ENCODE measurements at regions of chr2 and their contacts with region 1.

Region 1: GRCh38 chr2:202831242-202832220 is 40.0 kb downstream of the ICA1L start:
- DNase-seq: peak; percentile 43
- ATAC-seq: peak; percentile 93
- H3K4me3 ChIP-seq: no peak overlapping the region
- H3K27ac ChIP-seq: no peak overlapping the region
- H3K4me1 ChIP-seq: no peaks in the 10 kb centered on the region; the same call in 1 of the 2 replicates
- H3K27me3 ChIP-seq: no peaks in the 10 kb centered on the region
- CTCF ChIP-seq: peak; percentile 81

Region 2: DNA sequence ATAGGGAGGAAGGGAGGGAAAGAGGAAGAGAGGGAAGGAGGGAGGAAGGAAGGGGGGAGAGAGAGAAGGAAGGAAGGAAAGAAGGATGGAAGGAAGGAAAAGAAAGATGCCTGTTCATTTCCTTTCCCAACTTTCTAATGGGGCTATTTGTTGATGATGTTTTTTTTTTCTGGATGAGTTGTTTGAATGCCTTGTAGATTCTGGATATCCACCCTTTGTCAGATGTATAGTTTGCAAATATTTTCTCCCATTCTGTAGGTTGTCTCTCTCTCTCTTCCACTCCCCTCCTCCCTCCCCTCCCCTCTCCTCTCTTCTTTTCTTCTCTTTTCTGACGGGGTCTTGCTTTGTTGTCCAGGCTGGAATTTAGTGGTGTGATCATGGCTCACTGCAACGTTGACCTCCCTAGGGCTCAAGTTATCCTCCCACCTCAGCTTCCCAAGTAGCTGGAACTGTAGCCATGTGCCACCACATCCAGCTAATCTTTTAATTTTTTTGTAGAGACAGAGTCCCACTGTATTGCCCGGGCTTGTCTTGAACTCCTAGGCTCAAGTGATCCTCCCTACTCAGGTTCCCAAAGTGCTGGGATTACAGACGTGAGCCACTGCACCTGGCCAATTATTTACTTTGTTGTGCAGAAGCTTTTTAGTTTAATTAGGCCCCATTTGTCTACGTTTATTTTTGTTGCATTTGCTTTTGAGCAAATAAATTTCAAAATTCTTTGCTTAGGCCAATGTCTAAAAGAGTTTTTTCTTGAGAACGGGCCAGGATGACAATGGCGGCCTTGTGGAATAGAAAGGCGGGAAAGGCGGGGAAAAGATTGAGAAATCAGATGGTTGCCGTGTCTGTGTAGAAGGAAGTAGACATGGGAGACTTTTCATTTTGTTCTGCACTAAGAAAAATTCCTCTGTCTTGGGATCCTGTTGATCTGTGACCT is 254.0 kb before region 1 on chr2:
- CTCF ChIA-PET with region 1: interaction called, 10 read pairs
- POLR2A ChIA-PET with region 1: no interaction called
- in situ Hi-C with region 1: no loop called
- intact Hi-C with region 1: no loop called
- DNase-seq: no peak
- ATAC-seq: no peak
- H3K4me3 ChIP-seq: no peak overlapping the region
- H3K27ac ChIP-seq: no peak overlapping the region
- H3K4me1 ChIP-seq: no peaks in the 10 kb centered on the region
- H3K27me3 ChIP-seq: no peaks in the 10 kb centered on the region
- CTCF ChIP-seq: no peak

Region 3: DNA sequence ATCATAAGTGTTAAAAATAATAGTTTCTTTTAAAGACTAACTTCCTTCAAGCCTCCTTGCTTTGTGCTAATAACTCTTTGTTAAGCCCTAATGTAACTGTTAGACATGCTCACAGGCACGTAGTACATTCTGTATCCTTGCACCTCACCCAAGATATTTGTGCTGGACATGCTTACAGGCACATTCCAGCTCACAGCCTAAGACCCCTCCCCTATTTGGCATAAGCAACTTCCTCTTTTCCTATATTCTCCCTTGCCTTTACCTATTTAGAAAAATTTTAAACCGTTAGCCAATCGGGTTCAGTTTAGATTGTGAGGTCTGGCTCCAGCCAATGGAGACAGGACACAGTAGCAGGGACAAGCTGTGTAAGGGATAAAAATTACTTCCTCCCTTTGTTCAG is 27.6 kb before region 1 on chr2:
- CTCF ChIA-PET with region 1: interaction called, 11 read pairs
- POLR2A ChIA-PET with region 1: no interaction called
- in situ Hi-C with region 1: no loop called
- intact Hi-C with region 1: no loop called
- DNase-seq: no peak
- ATAC-seq: no peak
- H3K4me3 ChIP-seq: no peak overlapping the region
- H3K27ac ChIP-seq: no peak overlapping the region
- H3K4me1 ChIP-seq: no peaks in the 10 kb centered on the region
- H3K27me3 ChIP-seq: no peaks in the 10 kb centered on the region
- CTCF ChIP-seq: no peak

Region 4: DNA sequence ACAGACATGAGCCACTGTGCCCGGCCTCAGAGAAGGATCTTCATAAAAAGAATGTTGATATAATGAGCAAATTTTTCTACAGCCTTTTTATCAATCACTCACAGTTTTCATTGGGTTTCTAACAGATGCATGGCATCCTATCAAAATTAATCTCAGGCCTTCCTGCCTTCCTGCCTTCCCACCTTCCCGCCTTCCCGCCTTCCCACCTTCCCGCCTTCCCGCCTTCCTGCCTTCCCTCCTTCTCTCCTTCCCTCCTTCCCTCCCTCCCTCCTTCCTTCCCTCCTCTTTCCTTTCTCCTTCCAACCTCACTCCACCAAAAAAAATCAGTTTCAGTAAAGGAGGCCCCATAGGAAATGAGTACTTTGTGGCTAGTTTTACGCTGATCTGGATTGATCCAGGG is 129.0 kb after region 1 on chr2:
- CTCF ChIA-PET with region 1: no interaction called
- POLR2A ChIA-PET with region 1: no interaction called
- in situ Hi-C with region 1: no loop called
- intact Hi-C with region 1: no loop called
- DNase-seq: no peak
- ATAC-seq: no peak
- H3K4me3 ChIP-seq: no peak overlapping the region
- H3K27ac ChIP-seq: no peak overlapping the region
- H3K4me1 ChIP-seq: no peaks in the 10 kb centered on the region
- H3K27me3 ChIP-seq: no peaks in the 10 kb centered on the region
- CTCF ChIP-seq: no peak

Measured in Panc1 (cell line).